Dorsolateral prefrontal cortex (tissue), 120 donors: ENCODE measurements at regions of chr1 and their contacts with region 1.

Region 1: DNA sequence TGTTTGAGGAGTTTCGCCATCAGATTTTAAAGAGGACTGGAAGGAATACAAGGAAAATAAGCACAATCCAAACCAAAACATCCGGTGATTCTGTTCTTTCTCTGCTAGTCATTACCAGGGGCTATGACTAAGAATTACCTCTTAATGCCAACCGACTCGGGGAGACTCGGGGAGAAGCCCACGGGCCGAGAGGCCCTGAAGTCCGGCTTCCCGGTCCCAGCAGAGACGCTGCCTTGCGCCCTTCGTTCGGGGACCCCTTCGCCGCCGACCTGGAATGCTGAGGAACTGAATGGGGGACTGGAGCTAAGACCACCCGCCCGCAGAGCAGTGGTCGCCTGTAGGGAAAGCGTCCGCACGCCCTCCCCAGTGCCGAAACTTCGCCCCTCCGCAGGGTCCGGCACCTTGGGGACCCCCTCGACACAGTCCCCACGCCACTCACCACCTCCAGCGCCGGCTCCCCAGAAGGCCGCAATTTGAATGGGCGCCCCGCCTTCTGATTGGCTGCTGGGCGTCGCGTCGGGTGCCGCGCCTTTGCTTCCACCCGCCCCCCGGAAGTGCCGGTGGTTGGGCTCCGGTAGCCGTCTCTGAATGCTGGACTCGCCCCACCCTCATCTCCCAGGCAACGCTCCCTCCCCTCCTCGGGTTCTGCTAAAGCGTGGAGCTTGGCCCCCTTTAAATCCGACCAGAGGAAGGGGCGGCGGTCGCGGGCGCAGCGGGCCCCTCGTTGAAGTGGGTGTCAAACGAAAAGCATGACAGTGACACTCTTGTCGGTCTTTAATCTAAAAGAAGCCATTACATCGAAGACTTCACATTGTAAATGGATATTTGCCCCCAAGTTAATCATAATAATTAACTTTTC is at the start of gene KIF14:
- DNase-seq: peak; percentile 73 to 92 (median 88)
- H3K4me3 ChIP-seq: peak within 1 kb of the TSS; percentile 46 to 89 (median 75)
- H3K27ac ChIP-seq: peak within 1 kb of the TSS in 14 of 59 donors; percentile 6 to 56 (median 34)
- H3K27me3 ChIP-seq: no peaks in the 10 kb centered on the region
- CTCF ChIP-seq: peak in 12 of 56 donors; percentile 4 to 35 (median 19)
- total RNA-seq, gene KIF14: 0.06 to 0.49 (median 0.15) TPM in 101 of 120 experiments, not detected in the others

Region 2: DNA sequence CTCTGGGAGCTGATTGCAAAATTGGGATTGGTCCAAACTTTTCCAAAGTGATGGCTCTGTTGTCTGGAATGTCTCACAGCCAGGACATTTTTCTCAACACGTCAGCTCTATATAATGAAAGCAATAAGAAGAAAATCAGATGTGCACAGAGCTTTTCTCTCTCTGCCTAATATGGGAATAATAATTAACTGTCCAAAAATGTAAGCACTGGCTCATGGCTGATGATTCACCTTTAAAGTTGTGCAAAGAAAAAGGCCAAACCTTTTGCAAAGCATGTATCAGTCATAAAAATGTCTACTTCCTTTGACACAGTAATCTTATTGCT is 241.1 kb before region 1 on chr1:
- intact Hi-C with region 1: no loop called
- DNase-seq: no peak
- H3K4me3 ChIP-seq: no peak overlapping the region
- H3K27ac ChIP-seq: peak overlapping the region in 7 of 59 donors; percentile 4 to 53 (median 17)
- H3K27me3 ChIP-seq: no peaks in the 10 kb centered on the region
- CTCF ChIP-seq: no peak

Region 3: DNA sequence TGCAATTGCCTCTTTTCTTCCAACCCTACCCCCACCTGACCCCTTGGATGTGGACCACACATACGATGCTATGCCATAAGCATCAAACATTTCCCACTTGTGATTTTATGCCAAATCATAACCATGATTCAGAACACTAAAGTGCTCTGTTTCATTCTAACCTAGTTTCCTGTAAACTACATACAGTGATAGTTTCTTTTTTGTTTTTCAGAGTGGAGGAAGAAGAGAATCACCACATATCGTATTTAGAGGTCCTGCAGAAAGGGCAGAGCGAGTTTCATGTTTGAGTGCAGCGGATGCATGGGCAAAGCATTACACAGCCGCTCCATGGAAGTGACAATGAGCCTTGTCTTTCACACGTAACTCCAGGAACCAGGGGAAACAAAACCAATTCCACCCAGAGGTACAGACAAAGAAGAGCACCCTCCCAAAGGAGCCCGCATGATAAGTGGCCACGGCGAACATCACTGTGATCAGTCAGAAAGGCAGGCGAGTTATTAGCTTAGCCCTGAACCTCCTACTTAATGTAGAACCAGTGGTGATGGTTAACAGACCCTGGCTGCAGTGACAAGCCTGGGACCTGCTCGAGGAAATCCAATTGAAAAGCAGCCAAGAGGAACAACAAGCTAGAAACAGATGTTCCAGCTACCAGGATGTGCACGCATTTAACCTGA is 146.7 kb before region 1 on chr1:
- intact Hi-C with region 1: no loop called
- DNase-seq: no peak
- H3K4me3 ChIP-seq: no peak overlapping the region
- H3K27ac ChIP-seq: no peak overlapping the region
- H3K27me3 ChIP-seq: peaks cover 0 to 5% (median 0%) of the 10 kb centered on the region in 45 donors
- CTCF ChIP-seq: no peak

Region 4: DNA sequence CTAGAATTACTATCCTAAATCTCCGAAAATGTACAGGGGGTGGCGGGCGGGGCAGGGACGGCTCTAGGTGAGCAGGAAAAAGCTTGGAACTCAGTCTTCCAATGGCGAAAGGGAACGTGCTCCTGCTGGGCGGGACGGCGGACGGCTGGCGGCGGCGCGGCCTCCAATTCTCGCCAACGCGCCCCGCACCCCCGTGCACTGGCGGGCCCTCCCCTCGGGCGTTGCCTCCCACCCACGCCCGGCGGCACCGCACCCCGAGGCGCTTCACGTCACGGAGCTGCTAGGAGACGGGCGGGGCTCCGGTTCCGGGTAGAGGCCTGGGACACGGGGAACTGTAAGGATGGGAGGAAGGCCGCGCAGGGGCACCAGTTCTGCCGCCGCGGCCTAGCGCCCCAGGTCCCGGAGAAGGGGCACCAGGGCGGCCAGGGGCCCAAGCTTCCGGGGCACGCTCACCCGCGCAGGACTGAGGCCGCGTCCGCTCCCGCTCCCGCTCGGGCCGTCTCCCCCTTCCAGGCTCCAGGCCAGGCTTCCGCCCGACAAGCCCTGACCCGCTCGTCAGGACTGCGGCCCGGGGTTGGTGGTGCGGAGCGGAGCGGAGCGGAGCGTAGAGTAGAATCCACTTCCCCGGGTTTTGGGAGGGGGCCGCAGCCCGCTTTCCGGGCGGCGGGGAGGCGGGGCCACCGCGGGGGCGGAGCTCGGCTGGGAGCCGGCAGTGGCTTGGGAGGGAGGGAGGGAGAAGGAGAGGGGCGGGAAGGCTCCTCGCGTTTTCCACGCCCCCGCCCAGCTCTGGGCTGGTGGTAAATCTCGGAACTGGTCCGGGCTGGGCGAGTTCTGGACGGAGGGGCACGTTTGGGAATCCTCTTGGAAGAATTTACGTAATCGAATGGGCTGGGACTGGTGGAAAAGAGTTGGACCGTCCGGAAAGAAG is 49.1 kb after region 1 on chr1 and contains the start of gene DDX59:
- intact Hi-C with region 1: loop called (anchors 5 kb)
- DNase-seq: peak; percentile 82 to 97 (median 92)
- H3K4me3 ChIP-seq: peak within 1 kb of the TSS; percentile 58 to 97 (median 85)
- H3K27ac ChIP-seq: peak within 1 kb of the TSS; percentile 39 to 100 (median 99)
- H3K27me3 ChIP-seq: no peaks in the 10 kb centered on the region
- CTCF ChIP-seq: peak in 14 of 56 donors; percentile 8 to 41 (median 17)
- total RNA-seq, gene DDX59: 9.3 to 24.9 (median 15.1) TPM

Region 5: DNA sequence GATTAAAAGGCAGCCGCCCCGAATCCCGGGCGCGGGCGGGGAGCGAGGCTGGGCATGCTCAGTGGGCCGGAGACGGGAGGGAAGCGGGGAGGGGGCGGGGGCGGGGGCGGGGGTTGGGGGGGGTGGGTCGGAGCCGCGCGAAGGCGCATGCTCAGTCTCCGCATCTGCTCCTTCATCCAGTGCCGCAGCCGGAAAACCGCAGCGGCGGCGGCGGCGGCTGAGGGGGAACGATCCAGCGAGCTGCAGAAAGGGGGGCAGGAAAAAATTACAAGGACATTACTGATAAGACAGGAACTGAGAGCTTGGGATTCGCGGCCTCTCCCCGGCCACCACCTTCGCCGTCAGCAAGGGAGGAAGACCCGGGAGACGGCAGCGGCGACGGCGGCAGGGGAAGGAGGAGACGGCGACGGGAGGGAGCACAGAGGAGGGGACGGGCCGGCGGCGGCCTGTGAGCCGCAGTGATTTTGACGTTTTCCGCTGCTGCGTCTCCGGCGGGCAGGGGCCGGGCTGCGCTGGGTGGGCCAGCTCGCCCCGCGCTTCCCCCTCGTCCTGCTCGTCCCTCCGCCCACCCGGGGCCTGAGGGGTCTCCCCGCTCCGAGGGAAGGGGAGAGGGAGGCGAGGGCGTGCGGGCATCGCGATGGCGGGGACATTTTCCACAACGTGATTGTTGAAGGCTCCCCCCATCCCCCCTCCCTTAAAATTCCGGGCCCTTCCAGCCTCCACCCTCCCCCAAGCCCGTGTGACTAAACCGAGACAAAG is 118.4 kb after region 1 on chr1 and contains the start of gene CAMSAP2:
- intact Hi-C with region 1: loop called (anchors 2 to 5 kb)
- DNase-seq: peak; percentile 76 to 94 (median 88)
- H3K4me3 ChIP-seq: peak within 1 kb of the TSS; percentile 64 to 97 (median 88)
- H3K27ac ChIP-seq: peak within 1 kb of the TSS; percentile 96 to 100 (median 100)
- H3K27me3 ChIP-seq: no peaks in the 10 kb centered on the region
- CTCF ChIP-seq: peak in 8 of 56 donors; percentile 6 to 26 (median 12)
- total RNA-seq, gene CAMSAP2: 69.0 to 139 (median 110) TPM

Region 6: DNA sequence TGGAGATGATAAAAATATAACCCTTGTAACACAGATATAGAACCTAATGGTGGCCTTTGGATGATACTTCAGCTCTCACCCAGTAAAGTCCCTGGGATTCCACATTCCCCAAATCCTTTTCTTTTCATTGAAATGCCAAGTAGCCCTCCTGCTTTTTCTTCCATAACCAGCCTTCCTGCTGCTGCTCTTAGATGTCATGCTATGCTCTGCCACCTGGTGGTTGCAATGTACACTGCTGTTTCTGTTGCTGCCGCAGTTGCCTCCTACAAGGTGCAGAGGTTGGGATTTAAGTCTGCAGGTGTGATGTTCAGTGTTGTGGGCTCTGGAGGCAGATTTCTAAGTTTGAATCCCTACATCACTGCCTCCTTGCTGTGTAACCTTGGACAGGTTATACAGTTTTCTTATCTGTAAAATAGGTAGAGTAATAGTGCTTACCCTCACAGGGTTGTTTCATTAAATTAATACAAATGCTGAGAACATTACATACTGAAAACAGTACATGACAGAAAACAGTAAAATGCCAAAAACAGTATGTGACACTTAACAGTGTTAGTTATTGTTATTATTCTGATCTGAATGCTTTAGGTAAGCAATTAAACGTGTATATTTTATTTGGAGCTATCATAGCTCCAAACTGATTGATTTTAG is 182.5 kb after region 1 on chr1:
- intact Hi-C with region 1: loop called (anchors 2 kb)
- DNase-seq: peak; percentile 55 to 88 (median 80)
- H3K4me3 ChIP-seq: peak overlapping the region in 3 of 59 donors; percentile 0 to 25 (median 11)
- H3K27ac ChIP-seq: peak overlapping the region in 1 of 59 donors; percentile 25
- H3K27me3 ChIP-seq: no peaks in the 10 kb centered on the region
- CTCF ChIP-seq: peak; percentile 89 to 99 (median 97)

Region 7: GRCh38 chr1:200837931-200838571 is 217.5 kb after region 1 on chr1:
- intact Hi-C with region 1: loop called in 1 of 2 experiments (anchors 10 kb)
- DNase-seq: no peak
- H3K4me3 ChIP-seq: no peak overlapping the region
- H3K27ac ChIP-seq: no peak overlapping the region
- H3K27me3 ChIP-seq: no peaks in the 10 kb centered on the region
- CTCF ChIP-seq: peak; percentile 24 to 76 (median 54)

Region 8: GRCh38 chr1:200971955-200972711 is 351.6 kb after region 1 on chr1:
- intact Hi-C with region 1: loop called in 1 of 2 experiments (anchors 5 kb)
- DNase-seq: peak; percentile 57 to 83 (median 74)
- H3K4me3 ChIP-seq: peak overlapping the region in 27 of 59 donors; percentile 3 to 48 (median 27)
- H3K27ac ChIP-seq: peak overlapping the region in 31 of 59 donors; percentile 10 to 79 (median 55)
- H3K27me3 ChIP-seq: no peaks in the 10 kb centered on the region
- CTCF ChIP-seq: peak; percentile 87 to 100 (median 98)

Region 9: DNA sequence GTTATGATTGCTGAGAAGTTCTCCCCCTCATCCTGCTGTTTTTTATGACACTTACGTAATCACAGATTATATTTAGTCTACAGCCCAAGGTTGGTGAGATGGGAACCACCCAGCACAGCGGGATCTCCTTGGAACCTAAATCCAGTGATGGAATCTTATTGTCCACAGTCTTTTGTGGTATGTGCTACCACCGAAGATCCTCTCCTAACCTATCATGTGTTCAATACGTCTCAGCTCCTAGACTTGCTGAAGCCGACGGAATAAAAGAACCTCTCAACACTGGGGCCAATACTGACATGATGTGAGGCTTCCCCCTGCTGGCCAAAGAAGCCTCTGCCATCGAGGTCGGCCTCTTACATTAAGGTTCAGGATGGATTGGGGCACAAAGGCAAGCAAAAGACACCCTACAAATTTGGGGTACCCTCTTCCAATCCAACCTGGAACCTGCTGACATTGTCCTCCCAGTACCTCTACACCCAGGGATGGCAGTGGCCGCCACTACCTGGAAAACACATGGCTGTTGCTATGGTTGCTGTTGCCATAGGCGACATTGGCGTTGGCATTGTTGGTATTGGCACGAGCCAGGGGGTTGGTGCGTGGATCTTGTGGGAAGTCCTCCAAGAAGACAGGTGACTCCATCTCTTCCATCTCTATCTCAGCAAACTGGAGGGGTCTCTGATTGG is 422.4 kb after region 1 on chr1:
- intact Hi-C with region 1: loop called in 1 of 2 experiments (anchors 10 kb)
- DNase-seq: peak in 9 of 10 donors; percentile 29 to 88 (median 78)
- H3K4me3 ChIP-seq: peak overlapping the region in 1 of 59 donors; percentile 6
- H3K27ac ChIP-seq: peak overlapping the region in 26 of 59 donors; percentile 0 to 67 (median 33)
- H3K27me3 ChIP-seq: no peaks in the 10 kb centered on the region
- CTCF ChIP-seq: peak; percentile 69 to 97 (median 91)